Activated CD8-positive, alpha-beta memory T cell treated with anti-CD3 and anti-CD28 coated beads, Interleukin-2, amount 10 ng/mL, durations not matched to agents 7 days and 5 days (primary cell): ENCODE measurements at regions of chr15 and their contacts with region 1.

Region 1: DNA sequence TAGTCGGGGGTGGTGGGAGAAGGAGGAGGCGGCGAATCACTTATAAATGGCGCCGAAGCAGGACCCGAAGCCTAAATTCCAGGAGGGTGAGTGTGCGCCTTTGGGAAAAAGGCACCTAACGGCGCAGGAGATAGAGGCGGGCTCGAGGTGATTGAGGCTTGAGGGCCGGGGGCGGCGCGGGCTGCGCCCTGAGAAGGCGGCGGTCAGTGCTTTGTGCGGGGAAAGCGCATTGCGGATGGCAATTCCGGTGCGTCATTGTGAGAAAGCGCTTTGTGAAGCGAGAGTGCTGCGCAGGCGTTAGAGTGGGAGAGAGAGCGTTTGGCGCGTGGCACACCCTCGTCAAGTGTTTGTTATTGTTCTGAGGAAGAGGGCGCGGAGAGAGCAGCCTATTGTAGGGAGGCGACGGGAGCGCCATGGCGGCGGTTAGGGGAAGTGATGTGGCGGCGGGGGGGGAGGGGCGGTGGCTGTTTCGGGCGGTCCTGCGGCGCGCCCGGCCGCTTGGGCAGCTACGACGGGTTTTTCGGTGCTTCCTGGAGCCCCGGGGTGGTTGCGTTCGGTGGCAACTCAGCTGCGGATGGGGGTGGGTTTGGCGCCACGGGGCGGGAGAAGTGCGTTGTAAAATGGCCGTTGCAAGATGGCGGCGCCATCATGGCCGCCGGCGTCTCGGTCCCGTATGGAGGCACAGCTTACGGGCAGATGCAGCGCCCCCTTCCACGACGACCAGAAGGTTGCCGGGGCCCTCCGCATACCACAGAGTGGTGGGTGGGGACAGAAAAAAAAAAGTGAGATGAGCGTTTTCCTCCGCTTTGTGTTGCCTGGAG is 492 bp downstream of the MORF4L1 start:
- DNase-seq: peak; percentile 93
- ATAC-seq: peak; percentile 74
- H3K4me3 Mint-ChIP-seq: peak overlapping the region; percentile 91
- H3K27ac Mint-ChIP-seq: peak overlapping the region; percentile 99
- H3K4me1 Mint-ChIP-seq: peaks cover 44% of the 10 kb centered on the region
- H3K27me3 Mint-ChIP-seq: no peaks in the 10 kb centered on the region

Region 2: DNA sequence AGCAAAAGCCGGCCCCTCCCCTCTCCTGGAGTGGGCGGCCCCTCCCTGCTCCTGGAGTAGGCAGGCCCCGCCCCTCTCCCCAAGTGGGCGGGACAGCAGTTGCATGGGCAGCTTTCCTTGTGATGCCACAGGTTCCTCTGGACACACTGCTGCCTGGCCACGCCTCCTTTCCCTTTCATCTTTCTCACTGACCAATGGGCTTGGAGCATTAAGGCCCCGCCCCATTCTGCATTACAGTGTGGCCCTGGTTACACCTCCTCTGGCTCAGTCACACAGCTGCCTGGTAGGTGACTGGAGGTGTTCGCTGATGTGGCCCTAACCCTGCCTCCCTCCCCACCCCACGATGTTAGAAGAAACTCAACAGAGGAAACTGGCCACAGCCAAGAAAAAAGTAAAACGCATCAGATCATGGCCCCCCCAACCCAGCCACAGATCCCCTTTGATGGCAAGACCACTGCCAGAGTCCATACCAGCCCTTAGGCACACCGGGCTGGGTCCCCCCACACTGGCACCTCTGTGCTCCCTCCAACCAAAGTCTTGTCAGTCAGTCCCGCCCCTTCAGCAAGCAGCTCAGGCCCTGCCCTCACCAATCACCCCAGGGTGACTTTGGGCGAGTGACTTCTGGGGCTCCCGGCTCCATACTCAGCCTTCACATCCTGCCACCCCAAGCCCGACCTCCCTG is 146.2 kb before region 1 on chr15:
- CTCF ChIA-PET with region 1: no interaction called
- DNase-seq: no peak
- ATAC-seq: no peak
- H3K4me3 Mint-ChIP-seq: no peak overlapping the region
- H3K27ac Mint-ChIP-seq: no peak overlapping the region
- H3K4me1 Mint-ChIP-seq: peaks cover 2% of the 10 kb centered on the region
- H3K27me3 Mint-ChIP-seq: peaks cover 6% of the 10 kb centered on the region

Region 3: GRCh38 chr15:78859971-78860732 is 13.0 kb before region 1 on chr15:
- CTCF ChIA-PET with region 1: interaction called, 17 read pairs
- DNase-seq: peak; percentile 88
- ATAC-seq: peak; percentile 93
- H3K4me3 Mint-ChIP-seq: peak overlapping the region; percentile 78
- H3K27ac Mint-ChIP-seq: peak overlapping the region; percentile 80
- H3K4me1 Mint-ChIP-seq: peaks cover 7% of the 10 kb centered on the region
- H3K27me3 Mint-ChIP-seq: no peaks in the 10 kb centered on the region

Region 4: DNA sequence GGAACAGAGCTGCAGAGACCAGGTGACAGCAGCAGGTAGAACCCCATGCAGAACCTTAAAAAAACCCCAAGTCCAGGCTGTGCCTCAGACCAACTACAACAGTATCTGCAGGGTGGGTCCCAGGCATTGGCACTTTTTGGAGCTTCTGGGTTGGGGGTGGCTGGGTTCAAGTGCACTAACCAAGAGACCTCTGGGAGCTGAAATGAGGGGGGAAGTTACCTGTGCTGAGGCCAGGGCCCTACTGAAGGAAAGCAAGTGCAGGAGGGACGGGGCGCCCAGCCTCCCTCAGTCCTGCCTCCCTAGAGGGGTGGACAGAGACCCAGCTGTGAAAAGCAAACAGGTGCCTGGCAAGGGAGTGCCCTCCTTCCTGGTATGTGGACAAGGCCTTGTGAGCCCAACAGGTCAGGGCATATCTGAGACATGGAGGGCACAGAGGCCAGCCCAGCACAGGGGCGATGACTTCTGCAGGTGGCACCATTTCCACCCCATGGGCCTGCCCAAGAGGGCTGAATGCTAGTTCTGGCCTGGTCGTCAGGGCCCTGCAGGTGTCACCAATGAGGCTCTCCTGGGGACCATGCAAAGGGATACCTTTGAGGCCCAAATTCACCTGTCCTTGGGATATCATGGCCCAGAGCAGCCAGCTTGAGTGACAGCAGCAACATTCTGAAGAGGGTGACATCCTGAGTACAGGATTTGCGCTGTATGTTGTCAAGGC is 52.9 kb after region 1 on chr15:
- CTCF ChIA-PET with region 1: no interaction called
- DNase-seq: no peak
- ATAC-seq: no peak
- H3K4me3 Mint-ChIP-seq: no peak overlapping the region
- H3K27ac Mint-ChIP-seq: no peak overlapping the region
- H3K4me1 Mint-ChIP-seq: no peaks in the 10 kb centered on the region
- H3K27me3 Mint-ChIP-seq: no peaks in the 10 kb centered on the region

Region 5: DNA sequence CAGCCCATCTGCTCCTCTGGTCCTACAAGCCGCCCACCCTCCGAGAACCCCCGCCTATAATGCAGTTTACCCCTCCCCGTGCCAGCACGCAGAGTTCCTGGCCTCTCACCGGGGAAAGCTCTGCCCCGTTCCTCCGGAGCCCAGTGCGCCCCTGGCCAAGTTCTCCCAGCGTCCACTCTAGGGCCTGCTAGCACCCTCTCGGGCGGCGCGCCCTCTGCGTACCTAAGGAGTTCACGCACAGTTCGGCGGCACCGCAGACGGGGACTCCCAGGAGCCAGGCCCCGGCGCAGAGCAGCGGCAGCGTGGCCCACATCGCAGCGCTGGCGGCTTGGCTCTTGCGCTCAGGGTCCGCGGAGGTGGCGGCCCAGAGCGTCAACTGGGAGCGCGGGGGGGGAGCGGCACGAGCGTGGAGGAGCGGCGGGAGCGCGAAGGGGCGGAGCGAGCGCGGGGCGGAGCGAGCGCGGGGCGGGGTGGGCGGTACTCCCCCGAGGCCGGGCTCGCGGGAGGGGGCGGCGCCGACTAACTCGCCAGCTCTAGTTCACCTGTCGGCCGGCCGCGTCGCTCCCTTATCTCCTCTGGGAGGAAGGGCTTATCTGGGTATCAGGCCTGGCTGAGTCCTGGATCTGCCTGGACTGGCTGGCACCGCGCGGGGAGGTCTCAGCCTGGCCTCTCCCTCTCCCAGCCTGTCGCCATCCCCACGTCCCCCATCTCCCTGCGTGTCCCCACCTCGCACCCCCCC is 71.7 kb after region 1 on chr15 and contains the start of gene CTSH:
- CTCF ChIA-PET with region 1: no interaction called
- DNase-seq: peak; percentile 73
- ATAC-seq: peak; percentile 95
- H3K4me3 Mint-ChIP-seq: peak within 1 kb of the TSS; percentile 67
- H3K27ac Mint-ChIP-seq: no peak within 1 kb of the TSS
- H3K4me1 Mint-ChIP-seq: peaks cover 1% of the 10 kb centered on the region
- H3K27me3 Mint-ChIP-seq: peaks cover 23% of the 10 kb centered on the region
- total RNA-seq, gene CTSH: 33.9 to 48.1 TPM